PC-9 (cell line): ENCODE measurements at regions of chr11 and their contacts with region 1.

Region 1: GRCh38 chr11:129061466-129062194 is 119.0 kb upstream of the TP53AIP1 start:
- DNase-seq: peak; percentile 50 to 80
- H3K4me3 ChIP-seq: peak overlapping the region; percentile 28; the same call in 1 of the 2 replicates
- H3K27ac ChIP-seq: peak overlapping the region; percentile 90
- H3K4me1 ChIP-seq: peaks cover 19% of the 10 kb centered on the region
- H3K27me3 ChIP-seq: no peaks in the 10 kb centered on the region
- CTCF ChIP-seq: no peak

Region 2: GRCh38 chr11:129023970-129024676 is 37.5 kb before region 1 on chr11:
- CTCF ChIA-PET with region 1: no interaction called
- POLR2A ChIA-PET with region 1: no interaction called
- intact Hi-C with region 1: loop called (anchors 2 kb)
- DNase-seq: peak; percentile 82 to 94
- H3K4me3 ChIP-seq: peak overlapping the region; percentile 69
- H3K27ac ChIP-seq: peak overlapping the region; percentile 96
- H3K4me1 ChIP-seq: peaks cover 35% of the 10 kb centered on the region
- H3K27me3 ChIP-seq: no peaks in the 10 kb centered on the region
- CTCF ChIP-seq: no peak

Region 3: GRCh38 chr11:129295746-129296145 is 234.1 kb after region 1 on chr11:
- CTCF ChIA-PET with region 1: no interaction called
- POLR2A ChIA-PET with region 1: no interaction called
- intact Hi-C with region 1: no loop called
- DNase-seq: peak in 1 of 2 experiments; percentile 17
- H3K4me3 ChIP-seq: no peak overlapping the region
- H3K27ac ChIP-seq: no peak overlapping the region
- H3K4me1 ChIP-seq: no peaks in the 10 kb centered on the region; the same call in 1 of the 2 replicates
- H3K27me3 ChIP-seq: no peaks in the 10 kb centered on the region
- CTCF ChIP-seq: no peak